Endothelial cell of umbilical vein (primary cell): ENCODE measurements at regions of chr2 and their contacts with region 1.

Region 1: GRCh38 chr2:74002487-74003391 is 18.0 kb downstream of the TET3 start:
- DNase-seq: peak; percentile 84
- H3K4me3 ChIP-seq: peak overlapping the region; percentile 11 to 45 (median 44)
- H3K27ac ChIP-seq: no peak overlapping the region
- H3K4me1 ChIP-seq: peaks cover 9% of the 10 kb centered on the region
- H3K27me3 ChIP-seq: no peaks in the 10 kb centered on the region
- CTCF ChIP-seq: peak in 1 of 2 donors; percentile 3
- POLR2A ChIP-seq: no peak

Region 2: GRCh38 chr2:73877071-73877802 is 125.5 kb before region 1 on chr2:
- CTCF ChIA-PET with region 1: no interaction called
- POLR2A ChIA-PET with region 1: no interaction called
- dilution Hi-C with region 1: no loop called
- intact Hi-C with region 1: no loop called
- DNase-seq: no peak
- H3K4me3 ChIP-seq: no peak overlapping the region
- H3K27ac ChIP-seq: no peak overlapping the region
- H3K4me1 ChIP-seq: no peaks in the 10 kb centered on the region
- H3K27me3 ChIP-seq: peaks cover 0 to 2% of the 10 kb centered on the region in 2 experiments
- CTCF ChIP-seq: no peak
- POLR2A ChIP-seq: no peak

Region 3: DNA sequence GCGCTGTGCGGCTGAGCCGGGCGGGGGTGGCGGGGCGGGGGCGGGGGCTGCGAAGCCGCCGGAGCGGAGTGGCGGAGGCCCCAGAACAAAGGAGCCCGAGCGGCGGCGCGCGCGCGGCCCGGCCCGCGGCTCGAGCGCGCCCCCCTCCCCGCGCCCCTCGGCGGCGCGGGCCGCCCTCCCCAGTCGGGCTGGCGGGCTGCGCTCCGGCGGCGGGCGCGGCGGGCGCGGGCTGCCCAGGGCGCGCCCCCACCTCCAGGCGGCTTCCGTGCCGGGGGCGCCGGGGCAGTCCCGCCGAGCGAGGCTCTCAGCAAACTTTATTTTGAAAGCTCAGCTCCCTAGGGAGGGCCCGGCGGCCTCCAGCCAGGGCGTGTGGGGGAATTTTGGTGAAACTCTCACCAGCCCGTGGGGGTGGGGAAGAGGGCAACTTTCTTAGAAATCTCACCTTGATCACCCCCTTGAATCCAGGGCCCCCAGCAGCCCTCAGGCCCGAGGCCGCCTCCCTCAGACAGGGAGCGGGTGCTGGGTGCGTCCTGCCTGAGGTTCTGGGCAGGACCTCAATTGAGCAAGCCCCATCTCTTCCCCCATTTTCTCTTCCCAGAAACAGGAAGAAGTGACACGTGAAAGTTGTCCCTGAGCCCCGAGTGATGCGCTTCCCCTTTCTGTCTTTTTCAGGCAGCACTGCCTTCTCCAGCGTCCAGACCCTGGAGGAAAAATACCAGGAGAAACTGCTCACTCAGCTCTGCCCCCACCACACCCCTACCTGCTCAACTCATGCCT is 17.2 kb before region 1 on chr2:
- CTCF ChIA-PET with region 1: interaction called, 15 read pairs
- POLR2A ChIA-PET with region 1: no interaction called
- dilution Hi-C with region 1: no loop called
- intact Hi-C with region 1: loop called (anchors 1 kb)
- DNase-seq: no peak
- H3K4me3 ChIP-seq: peak overlapping the region; percentile 44 to 69 (median 66)
- H3K27ac ChIP-seq: peak overlapping the region; percentile 49
- H3K4me1 ChIP-seq: peaks cover 39% of the 10 kb centered on the region
- H3K27me3 ChIP-seq: no peaks in the 10 kb centered on the region
- CTCF ChIP-seq: no peak
- POLR2A ChIP-seq: no peak

Region 4: DNA sequence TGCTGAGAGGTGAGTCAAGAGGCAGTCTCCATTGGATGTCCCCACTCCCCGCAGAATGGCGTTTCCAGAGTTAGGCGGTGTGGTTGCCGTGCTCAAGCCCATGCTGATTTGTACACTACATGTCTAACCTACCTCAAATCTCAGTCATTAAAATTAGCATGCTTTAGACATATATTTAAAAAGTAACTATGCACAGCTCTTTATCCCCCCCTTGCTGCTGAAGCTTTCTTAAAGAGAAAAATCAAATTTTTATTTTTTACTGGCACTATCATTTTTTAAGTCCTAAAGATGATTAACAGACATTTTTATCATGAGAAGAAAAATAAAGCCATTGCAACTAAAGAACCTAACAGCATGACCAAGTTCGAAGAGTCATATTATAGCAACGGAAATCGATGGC is 102.1 kb after region 1 on chr2:
- CTCF ChIA-PET with region 1: no interaction called
- POLR2A ChIA-PET with region 1: no interaction called
- dilution Hi-C with region 1: no loop called
- intact Hi-C with region 1: loop called (anchors 5 kb)
- DNase-seq: no peak
- H3K4me3 ChIP-seq: no peak overlapping the region
- H3K27ac ChIP-seq: no peak overlapping the region
- H3K4me1 ChIP-seq: no peaks in the 10 kb centered on the region
- H3K27me3 ChIP-seq: no peaks in the 10 kb centered on the region
- CTCF ChIP-seq: no peak
- POLR2A ChIP-seq: no peak

Region 5: DNA sequence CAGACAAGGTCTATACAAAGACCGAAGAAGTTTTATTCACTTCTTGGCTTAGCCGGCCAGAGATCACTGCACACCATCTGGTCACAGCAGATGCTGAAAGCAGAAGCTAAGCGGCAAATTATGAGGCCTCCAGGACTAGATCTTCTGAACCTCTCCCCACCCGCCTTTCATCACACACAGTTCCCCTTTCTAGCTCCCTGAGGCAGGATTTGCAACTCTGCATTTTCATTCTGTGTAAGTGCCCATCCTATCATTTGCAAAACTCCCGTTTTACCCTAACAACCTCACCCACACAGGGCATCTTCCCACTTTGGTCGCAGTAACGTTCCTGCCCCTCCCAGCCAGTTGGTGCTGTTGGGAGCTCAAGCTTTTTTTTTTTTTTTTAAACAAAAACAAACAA is 179.0 kb after region 1 on chr2:
- CTCF ChIA-PET with region 1: no interaction called
- POLR2A ChIA-PET with region 1: no interaction called
- dilution Hi-C with region 1: no loop called
- intact Hi-C with region 1: no loop called
- DNase-seq: no peak
- H3K4me3 ChIP-seq: no peak overlapping the region
- H3K27ac ChIP-seq: no peak overlapping the region
- H3K4me1 ChIP-seq: peaks cover 7% of the 10 kb centered on the region
- H3K27me3 ChIP-seq: peaks cover 0 to 4% of the 10 kb centered on the region in 2 experiments
- CTCF ChIP-seq: no peak
- POLR2A ChIP-seq: no peak